ENCODE measurements at regions of chr12 and their contacts with region 1.

Region 1: DNA sequence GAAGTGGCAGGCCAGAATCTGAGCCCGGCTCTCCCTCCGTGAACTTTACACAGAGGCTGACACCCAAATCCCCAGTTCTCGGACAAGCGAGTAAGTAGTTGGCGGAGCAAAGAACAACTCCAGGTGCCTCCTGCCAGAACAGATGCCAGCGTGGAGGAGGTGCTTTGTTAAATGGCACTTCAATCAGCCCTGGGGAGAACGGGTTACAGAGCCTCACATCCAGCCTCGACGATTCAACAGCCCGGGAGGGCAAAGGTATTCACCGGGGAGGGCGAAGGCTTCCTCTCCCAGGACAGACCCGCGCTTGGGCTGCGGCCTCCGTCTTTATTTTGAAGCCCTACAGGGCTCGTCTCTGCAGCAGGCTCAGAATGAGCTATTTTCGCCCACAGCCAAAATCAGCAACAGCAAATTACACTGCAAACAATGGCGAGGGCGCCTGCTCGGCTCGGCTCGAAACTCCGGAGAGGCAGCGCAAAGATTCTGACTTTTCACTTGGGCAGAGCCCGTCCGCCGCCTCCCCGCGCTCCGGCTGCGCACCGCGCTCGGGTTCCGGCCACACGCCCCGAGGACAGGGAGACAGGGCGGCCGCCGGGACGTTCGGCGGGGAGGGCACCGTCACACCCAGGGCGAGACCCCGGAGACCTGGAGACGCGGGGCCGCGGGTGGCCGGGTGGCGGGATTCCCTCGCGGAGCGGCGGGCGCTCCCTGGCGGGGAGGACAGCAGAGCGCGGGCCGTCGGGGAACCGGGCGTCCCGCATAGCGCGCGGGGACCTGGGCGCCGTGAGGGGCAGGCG is 811 bp downstream of the TMCC3 start:
- DNase-seq: peak; percentile 55 to 60
- ATAC-seq: peak; percentile 51 to 64
- H3K4me3 ChIP-seq: peak overlapping the region; percentile 72 to 97 (median 76)
- H3K27ac ChIP-seq: peak overlapping the region; percentile 87 to 98 (median 91)
- H3K4me1 ChIP-seq: peaks cover 43 to 57% of the 10 kb centered on the region in 2 donors
- H3K27me3 ChIP-seq: no peaks in the 10 kb centered on the region
- CTCF ChIP-seq: peak; percentile 47 to 59 (median 54)
- POLR2A ChIP-seq: peak in 1 of 2 donors; percentile 5

Region 2: GRCh38 chr12:93668919-93669418 is 980.6 kb before region 1 on chr12:
- in situ Hi-C with region 1: no loop called
- intact Hi-C with region 1: loop called (anchors 10 kb)
- DNase-seq: no peak
- ATAC-seq: no peak
- H3K4me3 ChIP-seq: no peak overlapping the region
- H3K27ac ChIP-seq: no peak overlapping the region
- H3K4me1 ChIP-seq: peaks cover 5 to 8% of the 10 kb centered on the region in 2 donors
- H3K27me3 ChIP-seq: no peaks in the 10 kb centered on the region
- CTCF ChIP-seq: no peak
- POLR2A ChIP-seq: no peak

Region 3: GRCh38 chr12:94545935-94546771 is 103.4 kb before region 1 on chr12:
- in situ Hi-C with region 1: no loop called
- intact Hi-C with region 1: loop called (anchors 5 kb)
- DNase-seq: peak; percentile 23 to 35
- ATAC-seq: peak; percentile 86 to 96
- H3K4me3 ChIP-seq: no peak overlapping the region
- H3K27ac ChIP-seq: no peak overlapping the region
- H3K4me1 ChIP-seq: no peaks in the 10 kb centered on the region
- H3K27me3 ChIP-seq: no peaks in the 10 kb centered on the region
- CTCF ChIP-seq: peak; percentile 65 to 81 (median 76)
- POLR2A ChIP-seq: no peak

Region 4: DNA sequence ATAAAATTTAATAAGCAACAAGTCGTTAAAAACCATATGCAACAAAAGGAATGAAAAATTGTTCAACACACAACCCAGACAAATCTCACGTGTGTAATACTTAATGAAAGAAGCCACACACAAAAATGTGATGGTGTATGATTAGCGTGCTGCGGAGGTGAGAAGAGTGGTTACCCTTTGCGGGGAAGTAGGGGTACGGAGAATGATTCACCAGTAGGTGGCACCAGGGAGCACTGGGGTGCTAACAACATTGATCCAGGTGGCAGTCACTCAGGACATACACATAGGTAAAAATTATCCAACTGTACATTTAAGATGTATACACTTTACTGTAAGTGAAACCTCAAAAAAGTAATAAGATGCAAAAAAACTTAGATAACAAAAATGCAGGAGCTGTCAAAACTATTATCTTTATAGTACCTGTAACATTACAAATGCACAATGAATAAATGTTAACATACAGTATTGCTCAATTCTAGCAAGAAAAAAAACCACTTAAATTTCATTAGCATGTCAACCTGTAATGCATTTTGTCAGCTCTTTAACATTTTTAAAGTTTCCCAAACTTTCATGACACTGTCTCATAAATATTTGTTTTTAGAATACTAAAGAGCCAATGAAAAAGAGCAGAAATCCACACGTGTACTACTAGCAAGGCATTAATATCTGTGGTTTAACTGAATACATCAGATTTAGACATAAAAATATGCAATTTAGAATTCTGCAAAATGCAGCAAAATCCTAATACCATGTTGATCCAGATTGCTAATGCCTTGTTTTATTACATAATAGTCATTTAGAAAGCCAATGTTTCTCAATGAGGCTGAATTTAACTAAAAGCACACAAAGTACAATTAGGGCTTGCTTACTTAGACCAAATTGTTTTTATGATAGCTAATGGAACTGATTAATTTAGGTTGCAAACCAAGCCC is 45.8 kb before region 1 on chr12:
- in situ Hi-C with region 1: loop called in 1 of 4 experiments (anchors 5 kb)
- intact Hi-C with region 1: loop called (anchors 5 kb)
- DNase-seq: no peak
- ATAC-seq: peak in 1 of 2 donors; percentile 60
- H3K4me3 ChIP-seq: no peak overlapping the region
- H3K27ac ChIP-seq: peak overlapping the region in 1 of 4 donors; percentile 73
- H3K4me1 ChIP-seq: peaks cover 38 to 40% of the 10 kb centered on the region in 2 donors
- H3K27me3 ChIP-seq: no peaks in the 10 kb centered on the region
- CTCF ChIP-seq: peak; percentile 54 to 82 (median 64)
- POLR2A ChIP-seq: no peak

Region 5: GRCh38 chr12:95217377-95218149 is 568.0 kb after region 1 on chr12 and contains the starts of genes FGD6 and VEZT:
- in situ Hi-C with region 1: no loop called
- intact Hi-C with region 1: loop called (anchors 10 kb)
- DNase-seq: peak; percentile 99
- ATAC-seq: peak; percentile 89 to 93
- H3K4me3 ChIP-seq: peak within 1 kb of the TSS; percentile 76 to 94 (median 88)
- H3K27ac ChIP-seq: peak within 1 kb of the TSS; percentile 90 to 98 (median 96)
- H3K4me1 ChIP-seq: peaks cover 43 to 47% of the 10 kb centered on the region in 2 donors
- H3K27me3 ChIP-seq: no peaks in the 10 kb centered on the region
- CTCF ChIP-seq: peak; percentile 36 to 53 (median 49)
- POLR2A ChIP-seq: peak; percentile 77 to 81
- total RNA-seq, gene FGD6: 2.9 to 8.4 (median 4.4) TPM
- total RNA-seq, gene VEZT: 100 to 131 (median 118) TPM